IMR-90 (cell line): ENCODE measurements at regions of chr1 and their contacts with region 1.

Region 1: GRCh38 chr1:99180343-99180808 is 83.9 kb upstream of the PLPPR4 start:
- DNase-seq: peak; percentile 74
- ATAC-seq: peak; percentile 91
- H3K4me3 ChIP-seq: no peak overlapping the region
- H3K27ac ChIP-seq: no peak overlapping the region
- H3K4me1 ChIP-seq: no peaks in the 10 kb centered on the region
- H3K27me3 ChIP-seq: no peaks in the 10 kb centered on the region
- CTCF ChIP-seq: peak; percentile 90
- POLR2A ChIP-seq: no peak
- RAD21 ChIP-seq: peak; percentile 88

Region 2: GRCh38 chr1:98903261-98903660 is 277.1 kb before region 1 on chr1:
- CTCF ChIA-PET with region 1: no interaction called
- POLR2A ChIA-PET with region 1: interaction called, 20 read pairs
- dilution Hi-C with region 1: no loop called
- in situ Hi-C with region 1: no loop called
- intact Hi-C with region 1: no loop called
- DNase-seq: peak; percentile 88
- ATAC-seq: peak; percentile 89
- H3K4me3 ChIP-seq: no peak overlapping the region
- H3K27ac ChIP-seq: no peak overlapping the region
- H3K4me1 ChIP-seq: no peaks in the 10 kb centered on the region
- H3K27me3 ChIP-seq: no peaks in the 10 kb centered on the region; the same call in 1 of the 2 replicates
- CTCF ChIP-seq: no peak
- POLR2A ChIP-seq: no peak
- RAD21 ChIP-seq: no peak

Region 3: DNA sequence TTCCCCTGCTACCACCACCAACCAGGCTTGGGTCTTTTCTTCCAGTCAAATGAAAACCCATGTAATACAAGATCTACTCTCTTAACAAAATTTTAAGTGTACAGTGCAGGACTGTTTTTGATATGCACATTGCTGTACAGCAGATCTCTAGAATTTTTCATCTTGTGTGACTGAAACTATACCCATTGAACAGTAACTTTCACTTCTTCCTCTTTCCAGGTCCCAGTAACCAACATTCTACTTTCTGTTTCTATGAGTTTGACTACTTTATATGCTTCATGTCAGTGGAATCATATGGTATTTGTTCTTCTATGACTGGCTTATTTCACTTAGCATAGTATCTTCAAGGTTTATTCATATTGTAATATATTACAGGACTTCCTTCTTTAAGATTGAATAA is 38.6 kb after region 1 on chr1:
- CTCF ChIA-PET with region 1: no interaction called
- POLR2A ChIA-PET with region 1: no interaction called
- dilution Hi-C with region 1: no loop called
- in situ Hi-C with region 1: no loop called
- intact Hi-C with region 1: no loop called
- DNase-seq: no peak
- ATAC-seq: no peak
- H3K4me3 ChIP-seq: no peak overlapping the region
- H3K27ac ChIP-seq: no peak overlapping the region
- H3K4me1 ChIP-seq: no peaks in the 10 kb centered on the region; the same call in 1 of the 2 replicates
- H3K27me3 ChIP-seq: no peaks in the 10 kb centered on the region
- CTCF ChIP-seq: no peak
- POLR2A ChIP-seq: no peak
- RAD21 ChIP-seq: no peak

Region 4: GRCh38 chr1:99481391-99481996 is 301.1 kb after region 1 on chr1:
- CTCF ChIA-PET with region 1: interaction called, 10 read pairs
- POLR2A ChIA-PET with region 1: no interaction called
- dilution Hi-C with region 1: no loop called
- in situ Hi-C with region 1: loop called (anchors 10 kb)
- intact Hi-C with region 1: loop called (anchors 1 kb)
- DNase-seq: peak; percentile 68
- ATAC-seq: peak; percentile 71; the same call in 1 of the 2 replicates
- H3K4me3 ChIP-seq: no peak overlapping the region
- H3K27ac ChIP-seq: no peak overlapping the region
- H3K4me1 ChIP-seq: no peaks in the 10 kb centered on the region
- H3K27me3 ChIP-seq: no peaks in the 10 kb centered on the region
- CTCF ChIP-seq: peak; percentile 83
- POLR2A ChIP-seq: no peak
- RAD21 ChIP-seq: peak; percentile 88

Region 5: DNA sequence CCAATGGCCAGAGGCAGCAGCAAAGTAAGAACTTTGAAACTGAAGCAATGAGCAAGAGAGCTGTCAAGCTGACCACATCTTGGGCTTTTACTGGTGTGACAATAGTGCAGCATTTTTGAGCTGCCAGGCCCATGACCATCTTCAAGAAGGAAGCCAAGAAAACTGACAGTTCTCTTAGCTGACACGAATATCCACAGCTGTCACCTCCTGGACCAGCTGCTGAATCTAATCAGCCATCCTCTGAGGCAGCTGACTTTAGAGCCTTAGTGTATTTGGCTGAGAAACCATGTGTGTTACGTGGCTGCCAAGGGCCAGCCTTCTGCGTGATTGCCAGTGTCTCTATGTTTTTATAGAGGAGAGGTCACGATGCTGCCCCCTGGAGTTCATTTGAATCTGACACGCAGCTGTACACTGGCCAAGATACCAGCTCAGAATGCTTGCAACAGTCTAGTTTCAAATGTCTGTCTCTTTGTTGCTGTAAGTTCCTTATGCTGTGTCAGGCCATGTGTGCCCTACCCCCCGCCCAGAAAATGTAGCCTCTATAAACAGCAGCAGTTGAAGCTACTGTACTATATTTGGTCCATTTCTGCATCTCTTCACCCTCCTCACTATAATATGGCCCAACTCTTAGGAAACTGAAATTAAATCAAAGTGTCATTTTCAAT is 505.3 kb after region 1 on chr1:
- CTCF ChIA-PET with region 1: interaction called, 3 read pairs
- POLR2A ChIA-PET with region 1: no interaction called
- dilution Hi-C with region 1: no loop called
- in situ Hi-C with region 1: loop called (anchors 5 kb)
- intact Hi-C with region 1: loop called (anchors 5 kb)
- DNase-seq: peak; percentile 91
- ATAC-seq: peak; percentile 67
- H3K4me3 ChIP-seq: no peak overlapping the region
- H3K27ac ChIP-seq: peak overlapping the region; percentile 49; the same call in 1 of the 2 replicates
- H3K4me1 ChIP-seq: peaks cover 10% of the 10 kb centered on the region
- H3K27me3 ChIP-seq: no peaks in the 10 kb centered on the region
- CTCF ChIP-seq: peak; percentile 50
- POLR2A ChIP-seq: no peak
- RAD21 ChIP-seq: peak; percentile 41

Region 6: GRCh38 chr1:99707535-99708142 is 527.3 kb after region 1 on chr1:
- CTCF ChIA-PET with region 1: no interaction called
- POLR2A ChIA-PET with region 1: no interaction called
- dilution Hi-C with region 1: no loop called
- in situ Hi-C with region 1: no loop called
- intact Hi-C with region 1: loop called (anchors 1 kb)
- DNase-seq: peak; percentile 65
- ATAC-seq: peak; percentile 97
- H3K4me3 ChIP-seq: no peak overlapping the region
- H3K27ac ChIP-seq: no peak overlapping the region
- H3K4me1 ChIP-seq: no peaks in the 10 kb centered on the region
- H3K27me3 ChIP-seq: no peaks in the 10 kb centered on the region
- CTCF ChIP-seq: peak; percentile 94
- POLR2A ChIP-seq: 0 out of 2 replicates have a peak, but pooled peaks have one; percentile 31
- RAD21 ChIP-seq: peak; percentile 98